ENCODE measurements at regions of chr1 and their contacts with region 1.

Region 1: DNA sequence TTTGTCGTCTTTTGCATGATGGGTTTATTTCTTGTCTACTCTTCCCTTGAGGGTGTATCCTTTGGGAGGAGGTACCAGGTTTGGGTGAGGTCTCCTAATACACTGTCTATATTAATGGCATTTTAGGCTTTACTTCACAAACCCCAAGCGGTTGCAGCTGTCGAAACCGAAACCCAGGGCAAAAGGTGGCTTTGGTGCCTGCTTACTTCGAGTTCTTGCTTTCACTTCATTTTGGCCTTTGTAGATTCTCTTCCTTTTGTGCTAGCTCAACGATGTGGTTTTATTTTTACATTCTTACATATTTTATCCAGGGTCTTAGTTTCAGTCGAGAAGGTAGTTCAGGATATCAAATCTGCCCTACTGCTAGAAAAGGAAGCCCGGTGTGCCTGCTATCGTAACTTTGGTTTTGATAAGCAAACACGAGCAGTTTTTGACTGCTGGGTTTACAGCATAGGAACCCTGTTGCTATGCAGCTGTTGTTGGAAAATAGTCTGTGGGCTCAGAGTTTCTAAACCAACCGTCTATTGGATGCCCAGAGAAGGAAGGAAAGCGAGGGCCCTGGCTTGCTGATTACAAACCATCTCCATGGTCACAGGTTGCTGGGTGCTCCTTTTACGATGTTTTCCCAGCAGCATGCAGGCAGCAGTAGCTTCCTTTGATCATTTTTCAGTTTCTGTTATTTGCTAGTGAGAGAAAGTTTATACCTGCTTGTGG is 9.8 kb upstream of the TSPAN2 start:
- DNase-seq: peak; percentile 34
- ATAC-seq: peak; percentile 86
- H3K4me3 Mint-ChIP-seq: peak overlapping the region; percentile 88
- H3K27ac Mint-ChIP-seq: peak overlapping the region; percentile 99
- H3K4me1 Mint-ChIP-seq: peaks cover 29% of the 10 kb centered on the region
- H3K27me3 Mint-ChIP-seq: no peaks in the 10 kb centered on the region
- CTCF ChIP-seq: no peak

Region 2: GRCh38 chr1:114670083-114671010 is 428.8 kb before region 1 on chr1:
- CTCF ChIA-PET with region 1: no interaction called
- POLR2A ChIA-PET with region 1: no interaction called
- intact Hi-C with region 1: loop called (anchors 1 kb)
- DNase-seq: peak; percentile 80
- ATAC-seq: peak; percentile 99
- H3K4me3 Mint-ChIP-seq: peak overlapping the region; percentile 94
- H3K27ac Mint-ChIP-seq: peak overlapping the region; percentile 67
- H3K4me1 Mint-ChIP-seq: peaks cover 10% of the 10 kb centered on the region
- H3K27me3 Mint-ChIP-seq: peaks cover 30% of the 10 kb centered on the region
- CTCF ChIP-seq: no peak

Region 3: GRCh38 chr1:114780344-114781226 is 318.6 kb before region 1 on chr1 and contains the start of gene SIKE1:
- CTCF ChIA-PET with region 1: no interaction called
- POLR2A ChIA-PET with region 1: no interaction called
- intact Hi-C with region 1: loop called (anchors 10 kb)
- DNase-seq: peak; percentile 80
- ATAC-seq: peak; percentile 97
- H3K4me3 Mint-ChIP-seq: peak within 1 kb of the TSS; percentile 100
- H3K27ac Mint-ChIP-seq: peak within 1 kb of the TSS; percentile 97
- H3K4me1 Mint-ChIP-seq: peaks cover 28% of the 10 kb centered on the region
- H3K27me3 Mint-ChIP-seq: peaks cover 7% of the 10 kb centered on the region
- CTCF ChIP-seq: no peak
- total RNA-seq, gene SIKE1: 38.4 and 44.2 TPM in 2 replicates

Region 4: GRCh38 chr1:115062542-115063011 is 36.6 kb before region 1 on chr1:
- CTCF ChIA-PET with region 1: no interaction called
- POLR2A ChIA-PET with region 1: no interaction called
- intact Hi-C with region 1: loop called (anchors 1 kb)
- DNase-seq: peak; percentile 44
- ATAC-seq: peak; percentile 93
- H3K4me3 Mint-ChIP-seq: no peak overlapping the region
- H3K27ac Mint-ChIP-seq: peak overlapping the region; percentile 71
- H3K4me1 Mint-ChIP-seq: peaks cover 16% of the 10 kb centered on the region
- H3K27me3 Mint-ChIP-seq: no peaks in the 10 kb centered on the region
- CTCF ChIP-seq: no peak

Region 5: GRCh38 chr1:115112496-115113375 is 13.6 kb after region 1 on chr1:
- CTCF ChIA-PET with region 1: interaction called, 16 read pairs
- POLR2A ChIA-PET with region 1: interaction called, 3 read pairs
- intact Hi-C with region 1: loop called (anchors 1 kb)
- DNase-seq: peak; percentile 45
- ATAC-seq: peak; percentile 40
- H3K4me3 Mint-ChIP-seq: no peak overlapping the region
- H3K27ac Mint-ChIP-seq: no peak overlapping the region
- H3K4me1 Mint-ChIP-seq: no peaks in the 10 kb centered on the region
- H3K27me3 Mint-ChIP-seq: no peaks in the 10 kb centered on the region
- CTCF ChIP-seq: peak; percentile 75

Region 6: GRCh38 chr1:115976062-115976920 is 877.2 kb after region 1 on chr1 and contains the start of gene SLC22A15:
- CTCF ChIA-PET with region 1: no interaction called
- POLR2A ChIA-PET with region 1: interaction called, 3 read pairs
- intact Hi-C with region 1: loop called (anchors 1 kb)
- DNase-seq: peak; percentile 63
- ATAC-seq: peak; percentile 90
- H3K4me3 Mint-ChIP-seq: peak within 1 kb of the TSS; percentile 82
- H3K27ac Mint-ChIP-seq: peak within 1 kb of the TSS; percentile 71
- H3K4me1 Mint-ChIP-seq: peaks cover 16% of the 10 kb centered on the region
- H3K27me3 Mint-ChIP-seq: peaks cover 3% of the 10 kb centered on the region
- CTCF ChIP-seq: no peak
- total RNA-seq, gene SLC22A15: 4.1 and 4.6 TPM in 2 replicates

Measured in activated B cell treated with CpG ODN at 0.5 μM for 24 hours (primary cell).